Activated CD8-positive, alpha-beta T cell treated with anti-CD3 and anti-CD28 coated beads, Interleukin-2, amount 10 ng/mL, durations not matched to agents 7 days and 5 days (primary cell): ENCODE measurements at regions of chr19 and their contacts with region 1.

Region 1: GRCh38 chr19:58581227-58582151 is 8.4 kb upstream of the MZF1 start:
- DNase-seq: peak; percentile 95
- ATAC-seq: peak; percentile 94
- H3K4me3 Mint-ChIP-seq: no peak overlapping the region
- H3K27ac Mint-ChIP-seq: peak overlapping the region; percentile 79
- H3K4me1 Mint-ChIP-seq: peaks cover 21% of the 10 kb centered on the region
- H3K27me3 Mint-ChIP-seq: no peaks in the 10 kb centered on the region

Region 2: GRCh38 chr19:58362272-58362994 is 219.1 kb before region 1 on chr19 and contains the start of gene ZNF497:
- CTCF ChIA-PET with region 1: no interaction called
- POLR2A ChIA-PET with region 1: no interaction called
- DNase-seq: peak; percentile 98
- ATAC-seq: peak; percentile 90
- H3K4me3 Mint-ChIP-seq: peak within 1 kb of the TSS; percentile 80
- H3K27ac Mint-ChIP-seq: peak within 1 kb of the TSS; percentile 88
- H3K4me1 Mint-ChIP-seq: peaks cover 23% of the 10 kb centered on the region
- H3K27me3 Mint-ChIP-seq: no peaks in the 10 kb centered on the region
- total RNA-seq, gene ZNF497: 1.5 to 1.7 TPM

Region 3: GRCh38 chr19:58543826-58544590 is 37.5 kb before region 1 on chr19 and contains the start of gene TRIM28:
- CTCF ChIA-PET with region 1: interaction called, 11 read pairs
- POLR2A ChIA-PET with region 1: no interaction called
- DNase-seq: peak; percentile 100
- ATAC-seq: peak; percentile 94
- H3K4me3 Mint-ChIP-seq: peak within 1 kb of the TSS; percentile 97
- H3K27ac Mint-ChIP-seq: peak within 1 kb of the TSS; percentile 96
- H3K4me1 Mint-ChIP-seq: peaks cover 35% of the 10 kb centered on the region
- H3K27me3 Mint-ChIP-seq: peaks cover 18% of the 10 kb centered on the region
- total RNA-seq, gene TRIM28: 476 to 528 TPM